HCT116 (cell line): ENCODE measurements at regions of chr6 and their contacts with region 1.

Region 1: GRCh38 chr6:2209226-2209809 is 36.1 kb downstream of the GMDS start:
- DNase-seq: peak; percentile 45
- ATAC-seq: peak; percentile 90
- H3K4me3 ChIP-seq: no peak overlapping the region
- H3K27ac ChIP-seq: no peak overlapping the region
- H3K4me1 ChIP-seq: no peaks in the 10 kb centered on the region
- H3K27me3 ChIP-seq: no peaks in the 10 kb centered on the region
- CTCF ChIP-seq: peak; percentile 35 to 69 (median 54); a peak in 5 of 6 replicates
- POLR2A ChIP-seq: no peak
- RAD21 ChIP-seq: peak; percentile 54

Region 2: GRCh38 chr6:2196079-2196679 is 13.1 kb before region 1 on chr6:
- CTCF ChIA-PET with region 1: interaction called, 11 read pairs
- POLR2A ChIA-PET with region 1: no interaction called
- RAD21 ChIA-PET with region 1: no interaction called
- intact Hi-C with region 1: no loop called
- DNase-seq: peak; percentile 19
- ATAC-seq: peak; percentile 67
- H3K4me3 ChIP-seq: no peak overlapping the region
- H3K27ac ChIP-seq: no peak overlapping the region
- H3K4me1 ChIP-seq: peaks cover 4 to 10% of the 10 kb centered on the region in 2 experiments; a peak in 3 of 4 replicates
- H3K27me3 ChIP-seq: no peaks in the 10 kb centered on the region
- CTCF ChIP-seq: peak; percentile 41 to 59 (median 47); a peak in 5 of 6 replicates
- POLR2A ChIP-seq: no peak
- RAD21 ChIP-seq: peak; percentile 69

Region 3: GRCh38 chr6:2448820-2449571 is 239.7 kb after region 1 on chr6:
- CTCF ChIA-PET with region 1: interaction called, 3 read pairs
- POLR2A ChIA-PET with region 1: no interaction called
- RAD21 ChIA-PET with region 1: no interaction called
- intact Hi-C with region 1: loop called (anchors 5 kb)
- DNase-seq: peak; percentile 59
- ATAC-seq: peak; percentile 89
- H3K4me3 ChIP-seq: no peak overlapping the region
- H3K27ac ChIP-seq: no peak overlapping the region
- H3K4me1 ChIP-seq: peaks cover 0 to 4% of the 10 kb centered on the region in 2 experiments; a peak in 1 of 4 replicates
- H3K27me3 ChIP-seq: no peaks in the 10 kb centered on the region
- CTCF ChIP-seq: peak; percentile 69 to 83 (median 83)
- POLR2A ChIP-seq: no peak
- RAD21 ChIP-seq: peak; percentile 94